Posterior vena cava (tissue), 2 donors: ENCODE measurements at regions of chr3 and their contacts with region 1.

Region 1: DNA sequence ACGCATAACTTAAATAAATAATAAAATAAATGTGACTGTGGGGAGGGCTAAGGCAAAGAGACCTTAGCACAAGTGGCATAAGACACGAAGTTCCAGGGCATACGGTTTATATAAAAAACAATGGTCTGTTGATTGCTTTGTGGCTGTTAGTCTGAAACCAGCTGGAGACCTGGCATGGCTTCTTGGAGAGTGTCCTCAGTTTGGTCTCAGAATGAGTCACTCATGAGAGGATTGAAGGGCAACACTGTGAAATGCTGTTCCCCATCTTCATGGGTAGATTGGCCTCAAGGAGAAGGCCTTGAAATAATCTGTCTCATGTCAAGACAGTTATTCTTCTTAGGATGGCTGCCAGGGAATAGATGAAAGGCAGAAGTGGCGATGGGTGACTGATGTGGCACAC is 62.2 kb downstream of the SOX2 start:
- DNase-seq: no peak

Region 2: DNA sequence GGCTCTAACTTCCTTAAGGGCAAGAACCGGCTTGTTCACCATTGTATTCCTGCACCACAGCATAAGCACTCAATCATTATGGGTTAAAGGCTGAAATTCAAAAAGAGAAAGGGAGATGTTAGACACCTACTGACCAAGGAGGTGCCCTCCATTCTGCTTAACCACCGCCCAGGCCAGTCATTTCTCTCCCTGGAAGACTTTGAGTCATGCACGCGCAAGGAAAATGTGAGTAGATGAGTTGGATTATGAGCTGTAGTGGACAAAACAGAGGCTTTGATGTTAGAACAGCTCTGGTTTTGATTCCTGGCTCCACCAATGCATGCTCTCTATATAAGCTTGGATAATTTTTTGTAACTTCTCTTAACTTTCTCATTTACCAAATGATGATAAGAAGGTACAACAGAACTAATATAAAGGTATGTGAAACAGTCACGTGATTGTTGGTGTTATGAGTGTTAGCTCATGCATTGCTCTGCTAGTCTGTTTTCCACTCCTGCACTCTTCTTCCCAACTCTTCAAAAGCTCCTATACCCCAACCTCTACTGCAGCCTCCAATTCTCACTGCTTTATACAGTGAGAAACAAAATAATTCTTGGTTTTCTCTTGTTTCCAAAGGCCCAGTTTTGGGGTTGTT is 871.0 kb after region 1 on chr3:
- intact Hi-C with region 1: loop called in 1 of 2 experiments (anchors 5 kb)
- DNase-seq: no peak